ENCODE measurements at regions of chr14 and their contacts with region 1.

Region 1: DNA sequence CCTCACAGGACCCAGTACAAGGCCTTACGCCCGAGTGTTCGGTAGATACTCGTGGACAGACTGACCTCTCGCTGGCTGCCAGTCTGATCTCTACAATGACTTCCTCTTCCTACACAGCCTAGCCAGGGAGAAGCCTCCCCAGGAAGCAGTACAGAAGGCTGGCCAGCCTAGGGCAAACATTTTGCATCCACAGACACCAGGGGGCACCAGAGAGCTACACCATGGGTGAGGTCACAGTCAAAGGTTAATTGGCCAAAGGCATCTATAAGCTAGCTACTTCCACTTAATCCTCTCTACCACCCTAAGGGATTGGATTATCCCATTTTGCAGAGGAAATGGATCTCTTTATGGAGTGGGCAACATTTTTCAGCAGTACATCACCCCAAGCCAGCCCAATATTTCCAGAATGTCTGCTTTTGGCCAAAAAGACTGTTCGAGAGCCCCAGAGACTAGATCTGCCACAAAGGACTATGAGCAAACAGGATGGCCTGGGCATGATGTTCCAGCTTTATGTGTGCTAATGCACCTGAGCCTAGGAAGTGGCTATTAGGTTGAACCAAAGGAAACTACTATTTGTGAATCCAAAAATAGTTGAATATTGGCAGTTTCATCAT is 14.6 kb upstream of the PNMA1 start:
- DNase-seq: no peak
- H3K4me3 ChIP-seq: no peak overlapping the region
- H3K27me3 ChIP-seq: no peaks in the 10 kb centered on the region
- CTCF ChIP-seq: peak; percentile 93

Region 2: DNA sequence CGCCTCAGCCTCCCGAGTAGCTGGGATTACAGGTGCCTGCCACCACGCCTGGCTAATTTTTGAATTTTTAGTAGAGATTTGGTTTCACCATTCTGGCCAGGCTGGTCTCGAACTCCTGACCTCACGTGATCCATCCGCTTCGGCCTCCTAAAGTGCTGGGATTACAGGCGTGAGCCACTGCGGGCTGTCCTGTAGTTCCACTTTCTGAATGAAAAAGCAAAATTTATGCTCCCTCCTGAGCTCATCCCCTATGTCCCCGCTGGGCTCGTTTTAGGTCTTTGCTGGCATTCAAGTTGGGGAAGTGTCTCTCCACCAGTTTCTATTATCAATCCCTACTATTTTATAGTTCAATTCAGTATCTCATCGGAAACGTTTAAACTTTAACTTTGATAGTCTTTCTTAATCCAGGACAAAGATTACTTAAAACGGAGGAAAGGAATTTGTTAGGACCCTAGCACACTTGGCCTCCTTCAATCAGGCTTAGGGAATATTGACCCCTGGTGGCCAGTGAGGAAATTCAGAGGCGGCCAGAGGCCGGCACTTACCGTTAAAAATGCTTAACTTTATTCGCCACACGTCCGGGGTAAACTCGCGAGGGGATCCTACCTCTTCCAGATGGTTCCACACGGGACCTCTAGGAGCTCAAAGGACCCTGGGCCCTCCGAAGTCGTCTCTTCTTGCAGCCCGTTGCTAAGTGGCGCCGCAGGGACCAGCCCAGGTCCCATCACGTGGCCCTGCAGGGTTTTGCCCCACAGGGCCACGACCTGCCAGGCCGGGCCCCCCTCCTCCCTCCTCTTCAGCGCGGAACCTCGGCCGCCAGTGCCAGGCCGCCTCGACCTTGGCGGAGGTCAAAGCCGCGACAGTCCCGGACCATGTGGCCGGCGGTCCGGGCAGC is 95.5 kb before region 1 on chr14:
- CTCF ChIA-PET with region 1: no interaction called
- POLR2A ChIA-PET with region 1: no interaction called
- DNase-seq: peak; percentile 9
- H3K4me3 ChIP-seq: peak overlapping the region; percentile 28
- H3K27me3 ChIP-seq: no peaks in the 10 kb centered on the region
- CTCF ChIP-seq: peak; percentile 86

Region 3: GRCh38 chr14:73717711-73718417 is 11.0 kb before region 1 on chr14:
- CTCF ChIA-PET with region 1: interaction called, 11 read pairs
- POLR2A ChIA-PET with region 1: no interaction called
- DNase-seq: no peak
- H3K4me3 ChIP-seq: no peak overlapping the region
- H3K27me3 ChIP-seq: no peaks in the 10 kb centered on the region
- CTCF ChIP-seq: no peak

Region 4: GRCh38 chr14:73741386-73741875 is 12.6 kb after region 1 on chr14:
- CTCF ChIA-PET with region 1: interaction called, 45 read pairs
- POLR2A ChIA-PET with region 1: no interaction called
- DNase-seq: no peak
- H3K4me3 ChIP-seq: peak overlapping the region; percentile 17
- H3K27me3 ChIP-seq: no peaks in the 10 kb centered on the region
- CTCF ChIP-seq: 0 out of 2 replicates have a peak, but pooled peaks have one; percentile 6

Region 5: GRCh38 chr14:73753959-73754882 is 25.4 kb after region 1 on chr14:
- CTCF ChIA-PET with region 1: interaction called, 15 read pairs
- POLR2A ChIA-PET with region 1: no interaction called
- DNase-seq: no peak
- H3K4me3 ChIP-seq: peak overlapping the region; percentile 9; the same call in 1 of the 2 replicates
- H3K27me3 ChIP-seq: no peaks in the 10 kb centered on the region
- CTCF ChIP-seq: no peak

Region 6: GRCh38 chr14:73759714-73760597 is 31.1 kb after region 1 on chr14:
- CTCF ChIA-PET with region 1: interaction called, 15 read pairs
- POLR2A ChIA-PET with region 1: interaction called, 4 read pairs
- DNase-seq: peak; percentile 98
- H3K4me3 ChIP-seq: peak overlapping the region; percentile 69
- H3K27me3 ChIP-seq: no peaks in the 10 kb centered on the region
- CTCF ChIP-seq: no peak

Region 7: GRCh38 chr14:73825551-73826188 is 96.8 kb after region 1 on chr14:
- CTCF ChIA-PET with region 1: interaction called, 45 read pairs
- POLR2A ChIA-PET with region 1: no interaction called
- DNase-seq: no peak
- H3K4me3 ChIP-seq: no peak overlapping the region
- H3K27me3 ChIP-seq: no peaks in the 10 kb centered on the region
- CTCF ChIP-seq: peak; percentile 92

Region 8: GRCh38 chr14:73997108-73997943 is 268.5 kb after region 1 on chr14:
- CTCF ChIA-PET with region 1: no interaction called
- POLR2A ChIA-PET with region 1: no interaction called
- DNase-seq: no peak
- H3K4me3 ChIP-seq: no peak overlapping the region
- H3K27me3 ChIP-seq: no peaks in the 10 kb centered on the region
- CTCF ChIP-seq: no peak